Naive thymus-derived CD4-positive, alpha-beta T cell (primary cell): ENCODE measurements at regions of chr9 and their contacts with region 1.

Region 1: DNA sequence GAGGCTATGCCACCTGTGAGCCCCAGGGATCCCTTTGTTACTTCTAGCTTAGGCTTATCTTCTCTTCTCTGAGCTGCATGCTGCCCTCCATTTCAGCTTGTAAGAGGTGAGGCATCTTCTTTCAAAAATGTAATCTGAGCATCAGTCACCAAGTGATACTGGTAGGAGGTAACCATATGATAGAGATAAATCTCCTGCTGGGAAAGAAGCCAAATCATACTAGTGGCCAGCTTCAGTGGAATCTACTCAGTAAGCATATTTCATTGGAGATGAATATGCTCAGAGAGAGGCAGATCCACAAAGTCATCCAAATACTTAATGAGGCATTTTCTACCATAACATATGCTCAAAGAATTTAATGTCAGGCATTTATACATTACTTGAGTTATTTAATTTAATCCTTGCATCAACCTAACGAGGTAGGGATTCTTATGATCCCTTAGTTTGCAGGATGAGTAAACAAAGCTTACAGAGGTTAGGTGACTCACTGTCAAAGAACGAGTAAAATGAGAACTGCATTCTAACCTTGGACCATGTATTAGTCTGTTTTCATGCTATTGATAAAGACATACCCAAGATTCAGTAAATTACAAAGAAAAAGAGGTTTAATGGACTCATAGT is 50.9 kb upstream of the DMRTA1 start:
- DNase-seq: no peak
- ATAC-seq: no peak
- H3K4me3 ChIP-seq: no peak overlapping the region
- H3K4me3 Mint-ChIP-seq: no peak overlapping the region
- H3K27ac ChIP-seq: no peak overlapping the region
- H3K27ac Mint-ChIP-seq: no peak overlapping the region
- H3K4me1 ChIP-seq: no peaks in the 10 kb centered on the region
- H3K4me1 Mint-ChIP-seq: no peaks in the 10 kb centered on the region
- H3K27me3 ChIP-seq: no peaks in the 10 kb centered on the region
- H3K27me3 Mint-ChIP-seq: peaks cover 0 to 3% (median 0%) of the 10 kb centered on the region in 5 donors

Region 2: DNA sequence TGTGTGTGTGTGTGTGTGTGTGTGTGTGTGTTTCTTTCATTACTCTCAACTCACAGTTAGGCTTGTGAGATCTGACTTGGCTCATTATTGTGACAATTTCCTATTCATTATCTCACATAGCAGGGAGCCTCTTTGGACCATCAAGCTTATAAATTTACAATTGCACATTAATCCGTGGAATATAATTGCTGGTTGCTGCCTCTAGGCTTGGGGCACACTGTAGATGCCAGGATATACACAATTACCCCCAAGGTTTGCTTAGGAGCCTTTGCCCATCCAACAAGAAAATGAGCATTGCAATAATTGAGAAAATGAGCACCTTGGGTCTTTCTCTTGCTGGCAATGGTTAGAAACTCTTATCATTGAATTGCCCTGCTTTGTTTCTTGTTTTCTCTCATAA is 110.6 kb before region 1 on chr9:
- CTCF ChIA-PET with region 1: no interaction called
- POLR2A ChIA-PET with region 1: no interaction called
- intact Hi-C with region 1: loop called in 1 of 2 experiments (anchors 10 kb)
- DNase-seq: no peak
- ATAC-seq: no peak
- H3K4me3 ChIP-seq: no peak overlapping the region
- H3K4me3 Mint-ChIP-seq: no peak overlapping the region
- H3K27ac ChIP-seq: no peak overlapping the region
- H3K27ac Mint-ChIP-seq: no peak overlapping the region
- H3K4me1 ChIP-seq: no peaks in the 10 kb centered on the region
- H3K4me1 Mint-ChIP-seq: no peaks in the 10 kb centered on the region
- H3K27me3 ChIP-seq: no peaks in the 10 kb centered on the region
- H3K27me3 Mint-ChIP-seq: peaks cover 0 to 10% (median 5%) of the 10 kb centered on the region in 5 donors

Region 3: GRCh38 chr9:22343218-22343611 is 52.5 kb before region 1 on chr9:
- CTCF ChIA-PET with region 1: no interaction called
- POLR2A ChIA-PET with region 1: no interaction called
- intact Hi-C with region 1: no loop called
- DNase-seq: no peak
- ATAC-seq: no peak
- H3K4me3 ChIP-seq: no peak overlapping the region
- H3K4me3 Mint-ChIP-seq: no peak overlapping the region
- H3K27ac ChIP-seq: no peak overlapping the region
- H3K27ac Mint-ChIP-seq: no peak overlapping the region
- H3K4me1 ChIP-seq: no peaks in the 10 kb centered on the region
- H3K4me1 Mint-ChIP-seq: no peaks in the 10 kb centered on the region
- H3K27me3 ChIP-seq: no peaks in the 10 kb centered on the region
- H3K27me3 Mint-ChIP-seq: peaks cover 0 to 5% (median 0%) of the 10 kb centered on the region in 5 donors